Heart right ventricle (tissue), 16 donors: ENCODE measurements at regions of chr22 and their contacts with region 1.

Region 1: GRCh38 chr22:17712441-17712840 is 61.8 kb downstream of the BID start:
- DNase-seq: no peak
- ATAC-seq: no peak
- H3K4me3 ChIP-seq: no peak overlapping the region
- H3K27ac ChIP-seq: no peak overlapping the region
- H3K4me1 ChIP-seq: peaks cover 0 to 9% (median 2%) of the 10 kb centered on the region in 9 donors
- H3K27me3 ChIP-seq: no peaks in the 10 kb centered on the region
- CTCF ChIP-seq: no peak

Region 2: GRCh38 chr22:17552737-17553136 is 159.7 kb before region 1 on chr22:
- intact Hi-C with region 1: loop called in 1 of 10 experiments (anchors 10 kb)
- DNase-seq: peak in 1 of 2 donors; percentile 39
- ATAC-seq: peak in 7 of 8 donors; percentile 38 to 81 (median 58)
- H3K4me3 ChIP-seq: no peak overlapping the region
- H3K27ac ChIP-seq: peak overlapping the region in 1 of 10 donors; percentile 12
- H3K4me1 ChIP-seq: no peaks in the 10 kb centered on the region
- H3K27me3 ChIP-seq: no peaks in the 10 kb centered on the region
- CTCF ChIP-seq: no peak